ENCODE measurements at regions of chr17 and their contacts with region 1.

Region 1: GRCh38 chr17:76868176-76868668 is at the start of gene MGAT5B:
- DNase-seq: peak; percentile 76 to 85 (median 78)
- ATAC-seq: peak; percentile 92
- H3K4me3 ChIP-seq: no peak within 1 kb of the TSS
- H3K27ac ChIP-seq: no peak within 1 kb of the TSS
- H3K4me1 ChIP-seq: peaks cover 20% of the 10 kb centered on the region
- H3K27me3 ChIP-seq: peaks cover 0 to 33% of the 10 kb centered on the region in 2 donors
- CTCF ChIP-seq: peak; percentile 31 to 97 (median 90)
- POLR2A ChIP-seq: no peak
- total RNA-seq, gene MGAT5B: 3.6 TPM in 1 of 2 donors, not detected in the other

Region 2: DNA sequence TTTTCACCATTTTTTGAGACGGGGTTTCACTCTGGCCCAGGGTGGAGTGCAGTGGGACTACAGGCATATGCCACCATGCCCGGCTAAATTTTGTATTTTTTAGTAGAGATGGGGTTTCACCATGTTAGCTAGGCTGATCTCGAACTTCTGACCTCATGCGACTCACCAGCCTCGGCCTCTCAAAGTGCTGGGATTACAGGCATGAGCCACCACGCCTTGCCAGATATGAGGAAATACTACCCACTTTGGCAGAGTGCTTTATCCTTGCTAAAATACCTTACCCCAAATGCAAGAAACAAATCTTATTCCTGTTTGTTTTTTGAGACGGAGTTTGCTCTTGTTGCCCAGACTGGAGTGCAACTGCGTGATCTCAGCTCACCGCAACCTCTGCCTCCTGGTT is 62.9 kb before region 1 on chr17:
- intact Hi-C with region 1: no loop called
- DNase-seq: no peak
- ATAC-seq: no peak
- H3K4me3 ChIP-seq: no peak overlapping the region
- H3K27ac ChIP-seq: no peak overlapping the region
- H3K4me1 ChIP-seq: no peaks in the 10 kb centered on the region
- H3K27me3 ChIP-seq: no peaks in the 10 kb centered on the region
- CTCF ChIP-seq: no peak
- POLR2A ChIP-seq: no peak

Region 3: GRCh38 chr17:77054936-77055335 is 186.7 kb after region 1 on chr17:
- intact Hi-C with region 1: loop called (anchors 5 kb)
- DNase-seq: no peak
- ATAC-seq: no peak
- H3K4me3 ChIP-seq: no peak overlapping the region
- H3K27ac ChIP-seq: no peak overlapping the region
- H3K4me1 ChIP-seq: no peaks in the 10 kb centered on the region
- H3K27me3 ChIP-seq: no peaks in the 10 kb centered on the region
- CTCF ChIP-seq: no peak
- POLR2A ChIP-seq: no peak

Region 4: DNA sequence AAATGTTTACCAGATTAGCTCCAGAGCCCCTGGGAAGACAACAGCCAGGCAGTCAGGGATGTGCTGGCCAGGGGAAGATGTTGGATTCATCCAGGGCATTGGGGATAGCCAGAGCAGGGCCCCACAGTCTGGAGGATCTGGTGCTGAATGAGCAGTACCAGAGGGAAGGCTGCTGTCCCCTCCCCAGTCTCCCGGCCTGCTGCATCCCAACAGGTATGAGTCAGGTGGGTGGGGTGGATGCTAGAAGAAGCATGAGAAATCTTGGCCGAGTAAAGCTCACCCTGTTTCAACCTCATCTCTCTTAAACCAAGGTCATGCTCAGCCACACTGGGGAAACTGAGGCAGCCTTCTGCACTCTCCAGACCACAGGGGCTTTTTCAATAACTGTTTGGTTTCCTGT is 200.7 kb after region 1 on chr17:
- intact Hi-C with region 1: loop called (anchors 5 kb)
- DNase-seq: no peak
- ATAC-seq: no peak
- H3K4me3 ChIP-seq: no peak overlapping the region
- H3K27ac ChIP-seq: no peak overlapping the region
- H3K4me1 ChIP-seq: no peaks in the 10 kb centered on the region
- H3K27me3 ChIP-seq: peaks cover 0 to 12% of the 10 kb centered on the region in 2 donors
- CTCF ChIP-seq: no peak
- POLR2A ChIP-seq: no peak

Region 5: GRCh38 chr17:77247048-77247541 is 378.9 kb after region 1 on chr17:
- intact Hi-C with region 1: loop called (anchors 5 kb)
- DNase-seq: peak; percentile 81 to 88 (median 86)
- ATAC-seq: peak; percentile 91
- H3K4me3 ChIP-seq: peak overlapping the region; percentile 35 to 57
- H3K27ac ChIP-seq: peak overlapping the region in 1 of 4 donors; percentile 49
- H3K4me1 ChIP-seq: peaks cover 12% of the 10 kb centered on the region
- H3K27me3 ChIP-seq: no peaks in the 10 kb centered on the region
- CTCF ChIP-seq: peak; percentile 93 to 99 (median 97)
- POLR2A ChIP-seq: no peak

Region 6: GRCh38 chr17:77571155-77571981 is 703.1 kb after region 1 on chr17:
- intact Hi-C with region 1: no loop called
- DNase-seq: no peak
- ATAC-seq: no peak
- H3K4me3 ChIP-seq: no peak overlapping the region
- H3K27ac ChIP-seq: no peak overlapping the region
- H3K4me1 ChIP-seq: no peaks in the 10 kb centered on the region
- H3K27me3 ChIP-seq: peaks cover 0 to 13% of the 10 kb centered on the region in 2 donors
- CTCF ChIP-seq: no peak
- POLR2A ChIP-seq: no peak